ENCODE measurements at regions of chr6 and their contacts with region 1.

Region 1: DNA sequence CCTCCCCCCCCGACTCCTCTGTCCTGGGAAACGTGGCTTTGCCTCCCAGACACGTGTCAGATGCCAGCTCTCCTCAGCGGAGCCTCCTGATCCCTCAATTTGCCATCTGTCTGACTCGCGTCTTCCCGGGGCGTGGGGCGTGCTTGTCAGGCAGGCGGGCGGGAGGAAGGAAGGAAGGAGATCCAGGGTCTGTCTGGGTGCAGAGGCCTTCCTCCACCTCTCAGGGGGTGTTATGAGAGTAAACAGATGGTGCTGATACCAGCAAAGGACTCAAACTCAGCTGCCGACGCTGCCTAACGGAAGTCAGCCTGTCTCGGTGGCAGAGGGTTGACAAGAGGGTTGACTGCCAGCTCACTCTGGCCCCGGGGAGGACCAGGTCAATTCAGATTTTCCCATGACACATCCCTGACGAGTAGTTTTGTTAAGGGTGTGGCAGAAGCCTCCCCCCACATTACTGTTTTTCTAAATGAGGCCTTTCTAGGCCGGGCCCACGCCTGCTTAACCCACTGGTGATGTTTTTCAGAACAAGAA is 17.0 kb downstream of the UQCC2 start:
- DNase-seq: peak; percentile 58 to 86 (median 67)
- H3K4me3 ChIP-seq: no peak overlapping the region
- H3K4me3 Mint-ChIP-seq: peak overlapping the region in 7 of 8 donors; percentile 69 to 89 (median 69)
- H3K27ac ChIP-seq: peak overlapping the region; percentile 76
- H3K27ac Mint-ChIP-seq: peak overlapping the region; percentile 97 to 99 (median 98)
- H3K4me1 ChIP-seq: peaks cover 65% of the 10 kb centered on the region
- H3K4me1 Mint-ChIP-seq: peaks cover 36 to 84% (median 59%) of the 10 kb centered on the region in 4 donors
- H3K27me3 ChIP-seq: no peaks in the 10 kb centered on the region
- H3K27me3 Mint-ChIP-seq: no peaks in the 10 kb centered on the region

Region 2: DNA sequence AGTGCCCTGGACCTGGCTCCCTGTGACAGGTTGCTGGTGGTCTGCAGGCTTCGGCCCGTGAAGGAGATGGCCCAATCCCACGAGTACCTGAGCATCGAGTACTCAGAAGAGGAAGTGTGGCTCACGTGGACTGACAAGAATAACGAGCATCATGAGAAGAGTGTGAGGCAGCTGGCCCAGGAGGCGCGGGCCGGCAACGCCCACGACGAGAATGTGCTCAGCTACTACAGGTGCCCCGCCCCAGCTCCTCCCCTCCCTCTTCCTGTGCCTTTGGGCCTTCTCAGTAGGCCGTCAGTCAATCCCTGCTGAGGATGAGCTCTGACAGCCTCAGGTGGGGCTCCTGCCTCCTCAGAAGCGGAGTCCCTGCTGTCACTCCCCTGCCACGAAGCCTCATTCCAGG is 25.5 kb before region 1 on chr6:
- CTCF ChIA-PET with region 1: interaction called, 6 read pairs
- POLR2A ChIA-PET with region 1: interaction called, 7 read pairs
- intact Hi-C with region 1: loop called (anchors 2 kb)
- DNase-seq: peak; percentile 68 to 81 (median 79)
- H3K4me3 ChIP-seq: no peak overlapping the region
- H3K4me3 Mint-ChIP-seq: peak overlapping the region in 2 of 8 donors; percentile 26 to 36
- H3K27ac ChIP-seq: peak overlapping the region; percentile 51
- H3K27ac Mint-ChIP-seq: peak overlapping the region; percentile 80 to 96 (median 94)
- H3K4me1 ChIP-seq: peaks cover 14% of the 10 kb centered on the region
- H3K4me1 Mint-ChIP-seq: peaks cover 14 to 19% (median 17%) of the 10 kb centered on the region in 4 donors
- H3K27me3 ChIP-seq: no peaks in the 10 kb centered on the region
- H3K27me3 Mint-ChIP-seq: no peaks in the 10 kb centered on the region

Region 3: GRCh38 chr6:33683051-33683571 is 11.4 kb before region 1 on chr6:
- CTCF ChIA-PET with region 1: interaction called, 8 read pairs
- POLR2A ChIA-PET with region 1: interaction called, 22 read pairs
- intact Hi-C with region 1: no loop called
- DNase-seq: peak in 3 of 5 donors; percentile 45 to 70 (median 51)
- H3K4me3 ChIP-seq: no peak overlapping the region
- H3K4me3 Mint-ChIP-seq: peak overlapping the region in 1 of 8 donors; percentile 40
- H3K27ac ChIP-seq: peak overlapping the region; percentile 24
- H3K27ac Mint-ChIP-seq: peak overlapping the region in 6 of 7 donors; percentile 60 to 91 (median 78)
- H3K4me1 ChIP-seq: peaks cover 14% of the 10 kb centered on the region
- H3K4me1 Mint-ChIP-seq: peaks cover 6 to 24% (median 13%) of the 10 kb centered on the region in 4 donors
- H3K27me3 ChIP-seq: no peaks in the 10 kb centered on the region
- H3K27me3 Mint-ChIP-seq: no peaks in the 10 kb centered on the region